Heart right ventricle (tissue), 16 donors: ENCODE measurements at regions of chr9 and their contacts with region 1.

Region 1: DNA sequence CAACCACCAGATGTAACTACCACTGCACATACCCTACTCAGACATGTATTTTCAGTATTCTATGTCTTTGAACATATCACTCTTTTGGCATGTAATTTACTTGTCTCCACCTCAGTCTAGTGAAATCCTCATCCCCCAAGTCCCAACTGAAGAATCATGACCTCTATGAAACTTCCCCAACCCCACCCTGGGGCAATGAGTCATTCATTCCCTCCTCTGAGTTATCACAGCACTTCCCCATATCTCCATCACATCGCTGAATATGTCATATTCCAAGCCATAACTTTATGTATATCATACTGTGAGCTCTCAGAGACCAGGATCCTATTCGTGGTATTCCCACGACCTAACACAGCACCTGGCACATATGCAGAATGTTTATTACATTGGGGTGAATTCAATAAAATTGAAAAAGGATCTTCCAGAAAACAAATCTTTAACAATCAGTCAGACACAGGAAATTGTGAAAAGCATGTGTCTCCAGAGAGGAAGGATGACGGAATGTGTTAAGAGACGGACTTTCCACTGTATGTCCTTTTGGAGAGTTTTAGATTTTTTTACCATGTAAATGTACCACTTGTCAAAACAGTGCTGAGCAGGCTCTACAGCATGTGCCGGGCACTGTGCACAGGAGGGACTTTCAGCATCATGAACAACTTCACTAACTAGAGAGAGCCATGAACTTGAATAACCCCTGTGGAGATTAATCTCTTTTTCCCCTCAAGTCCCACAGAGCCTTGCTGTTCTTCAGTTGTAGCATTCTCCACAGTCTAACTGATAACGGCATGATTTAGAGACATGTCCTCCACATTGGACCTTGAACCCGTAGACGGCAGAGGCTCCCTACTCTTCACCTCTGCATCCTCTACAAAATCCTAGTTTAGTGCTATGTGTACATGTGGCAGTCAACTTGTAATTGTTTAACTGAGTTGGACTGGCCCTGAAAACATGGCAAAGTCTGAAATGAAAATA is 213.5 kb downstream of the GLIS3 start:
- DNase-seq: peak in 1 of 2 donors; percentile 26
- ATAC-seq: peak; percentile 43 to 77 (median 60)
- H3K4me3 ChIP-seq: no peak overlapping the region
- H3K27ac ChIP-seq: peak overlapping the region in 9 of 10 donors; percentile 21 to 67 (median 45)
- H3K4me1 ChIP-seq: peaks cover 0 to 32% (median 5%) of the 10 kb centered on the region in 9 donors
- H3K27me3 ChIP-seq: no peaks in the 10 kb centered on the region
- CTCF ChIP-seq: no peak

Region 2: GRCh38 chr9:3830291-3830690 is 256.1 kb before region 1 on chr9:
- intact Hi-C with region 1: no loop called
- DNase-seq: no peak
- ATAC-seq: no peak
- H3K4me3 ChIP-seq: no peak overlapping the region
- H3K27ac ChIP-seq: no peak overlapping the region
- H3K4me1 ChIP-seq: no peaks in the 10 kb centered on the region
- H3K27me3 ChIP-seq: no peaks in the 10 kb centered on the region
- CTCF ChIP-seq: no peak

Region 3: DNA sequence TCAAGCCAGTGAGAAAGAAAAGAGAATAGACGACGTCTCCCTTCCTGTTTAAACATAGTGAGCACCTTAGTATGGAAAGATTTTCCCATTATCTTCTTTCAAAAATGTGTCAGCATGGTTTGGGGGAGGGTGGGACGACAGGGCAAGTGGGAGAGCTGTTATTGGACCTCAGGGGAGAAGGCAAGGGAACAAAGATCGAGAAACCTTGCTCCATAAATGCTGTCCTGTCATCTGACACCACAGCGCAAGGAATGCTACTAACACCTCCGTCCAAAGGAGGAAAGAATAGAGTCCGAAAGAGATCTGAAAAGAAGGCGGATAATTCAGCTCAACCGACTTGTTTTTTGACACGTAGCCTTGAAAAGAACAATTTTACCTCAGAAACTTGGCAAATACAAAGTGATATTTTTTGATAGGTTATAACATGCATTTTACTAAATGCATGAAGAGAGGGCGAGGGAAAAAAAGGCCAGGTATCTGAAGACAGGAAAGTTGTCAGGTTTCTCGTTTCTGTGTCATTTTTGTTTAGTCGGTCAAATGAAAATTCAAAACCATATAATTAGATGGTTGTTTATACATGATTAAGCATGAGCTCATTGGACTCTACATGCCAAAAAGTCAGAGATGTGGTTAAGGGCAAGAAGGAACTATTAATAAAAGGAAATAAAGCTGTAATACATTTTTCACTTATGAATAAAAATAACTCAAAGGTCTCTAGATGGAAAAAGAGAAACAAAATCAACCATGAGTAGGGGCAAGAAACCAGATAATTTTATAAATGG is 57.7 kb after region 1 on chr9:
- intact Hi-C with region 1: no loop called
- DNase-seq: no peak
- ATAC-seq: peak in 1 of 8 donors; percentile 41
- H3K4me3 ChIP-seq: peak overlapping the region in 4 of 10 donors; percentile 2 to 25 (median 13)
- H3K27ac ChIP-seq: peak overlapping the region in 6 of 10 donors; percentile 6 to 48 (median 40)
- H3K4me1 ChIP-seq: peaks cover 0 to 17% (median 0%) of the 10 kb centered on the region in 9 donors
- H3K27me3 ChIP-seq: peaks cover 0 to 3% (median 0%) of the 10 kb centered on the region in 7 donors
- CTCF ChIP-seq: no peak

Region 4: GRCh38 chr9:4207881-4208615 is 121.6 kb after region 1 on chr9:
- intact Hi-C with region 1: loop called in 1 of 10 experiments (anchors 10 kb)
- DNase-seq: peak in 1 of 2 donors; percentile 20
- ATAC-seq: peak; percentile 67 to 93 (median 90)
- H3K4me3 ChIP-seq: no peak overlapping the region
- H3K27ac ChIP-seq: peak overlapping the region in 8 of 10 donors; percentile 5 to 65 (median 52)
- H3K4me1 ChIP-seq: peaks cover 0 to 28% (median 16%) of the 10 kb centered on the region in 9 donors
- H3K27me3 ChIP-seq: no peaks in the 10 kb centered on the region
- CTCF ChIP-seq: no peak